CD14-positive monocyte (primary cell): ENCODE measurements at regions of chr6 and their contacts with region 1.

Region 1: DNA sequence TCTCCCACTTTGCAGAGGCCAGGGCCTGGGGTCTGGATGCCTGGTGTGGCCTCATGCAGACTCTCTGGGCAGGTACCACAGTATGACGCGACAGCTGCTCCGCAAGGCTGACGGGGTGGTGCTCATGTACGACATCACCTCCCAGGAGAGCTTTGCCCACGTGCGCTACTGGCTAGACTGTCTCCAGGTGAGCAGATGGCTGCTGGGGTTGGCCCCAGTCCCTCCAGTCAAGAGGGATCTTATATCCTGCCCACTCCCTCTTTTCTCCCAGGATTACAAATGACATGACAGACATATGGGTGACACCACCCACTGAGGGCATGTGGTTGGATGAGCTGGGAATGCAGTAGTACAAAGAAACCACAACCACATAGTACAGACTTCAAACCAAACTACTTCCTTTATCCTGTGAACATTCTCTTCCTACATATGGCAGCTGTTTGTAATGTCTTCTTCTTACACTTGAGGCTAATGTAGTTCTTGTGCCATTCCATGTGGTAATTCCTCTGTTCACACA is 29.9 kb downstream of the RAB44 start:
- DNase-seq: peak; percentile 72 to 84 (median 78)
- H3K4me3 ChIP-seq: no peak overlapping the region
- H3K4me3 Mint-ChIP-seq: no peak overlapping the region
- H3K27ac ChIP-seq: peak overlapping the region; percentile 63 to 79
- H3K27ac Mint-ChIP-seq: peak overlapping the region; percentile 86 to 94 (median 90)
- H3K4me1 ChIP-seq: peaks cover 24 to 30% of the 10 kb centered on the region in 2 donors
- H3K4me1 Mint-ChIP-seq: peaks cover 39% of the 10 kb centered on the region
- H3K27me3 ChIP-seq: no peaks in the 10 kb centered on the region
- H3K27me3 Mint-ChIP-seq: peaks cover 0 to 3% (median 2%) of the 10 kb centered on the region in 3 donors
- CTCF ChIP-seq: no peak

Region 2: GRCh38 chr6:36559011-36559793 is 168.4 kb before region 1 on chr6:
- intact Hi-C with region 1: no loop called
- DNase-seq: peak in 1 of 3 donors; percentile 15
- H3K4me3 ChIP-seq: peak overlapping the region in 1 of 3 experiments; percentile 51
- H3K4me3 Mint-ChIP-seq: peak overlapping the region in 1 of 2 donors; percentile 64
- H3K27ac ChIP-seq: peak overlapping the region; percentile 28 to 79
- H3K27ac Mint-ChIP-seq: peak overlapping the region; percentile 60 to 90 (median 87)
- H3K4me1 ChIP-seq: peaks cover 47 to 48% of the 10 kb centered on the region in 2 donors
- H3K4me1 Mint-ChIP-seq: peaks cover 55% of the 10 kb centered on the region
- H3K27me3 ChIP-seq: no peaks in the 10 kb centered on the region
- H3K27me3 Mint-ChIP-seq: peaks cover 0 to 2% (median 1%) of the 10 kb centered on the region in 3 donors
- CTCF ChIP-seq: no peak

Region 3: DNA sequence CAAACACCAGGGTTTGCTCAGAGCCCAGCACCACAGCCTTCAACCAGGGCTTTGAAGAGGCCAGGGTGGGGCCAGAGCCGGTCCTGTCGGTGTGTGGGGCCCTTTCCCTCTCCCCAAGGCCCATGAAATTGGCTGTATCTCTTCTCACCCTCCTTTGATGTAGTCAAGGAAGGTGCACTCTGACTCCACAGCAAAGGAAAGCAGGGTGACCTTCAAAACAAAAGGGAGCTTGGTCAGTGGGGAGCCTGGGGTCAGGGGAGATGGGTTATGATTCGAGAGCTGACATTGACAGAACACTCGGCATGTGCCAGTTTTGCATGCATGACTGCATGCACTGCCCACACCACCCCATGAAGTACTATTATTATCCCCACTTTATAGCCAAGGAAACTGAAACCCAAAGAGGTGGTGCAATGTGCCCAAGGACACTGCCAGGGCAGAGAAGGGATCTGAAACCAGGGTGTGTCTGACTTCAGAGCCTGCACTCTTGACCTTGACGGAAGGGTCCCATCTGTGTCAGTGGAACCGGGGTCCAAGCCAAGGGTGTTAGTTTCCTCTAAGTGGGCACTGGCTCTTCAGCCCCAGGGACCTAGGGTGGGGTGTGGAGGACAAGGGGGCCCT is 25.4 kb after region 1 on chr6:
- intact Hi-C with region 1: loop called in 1 of 2 experiments (anchors 2 kb)
- DNase-seq: peak; percentile 90 to 93 (median 92)
- H3K4me3 ChIP-seq: peak overlapping the region in 1 of 3 experiments; percentile 29
- H3K4me3 Mint-ChIP-seq: peak overlapping the region; percentile 47 to 51
- H3K27ac ChIP-seq: peak overlapping the region; percentile 97 to 98
- H3K27ac Mint-ChIP-seq: peak overlapping the region; percentile 97 to 100 (median 98)
- H3K4me1 ChIP-seq: peaks cover 69 to 71% of the 10 kb centered on the region in 2 donors
- H3K4me1 Mint-ChIP-seq: peaks cover 69% of the 10 kb centered on the region
- H3K27me3 ChIP-seq: no peaks in the 10 kb centered on the region
- H3K27me3 Mint-ChIP-seq: peaks cover 0 to 2% (median 1%) of the 10 kb centered on the region in 3 donors
- CTCF ChIP-seq: no peak